WTC11 (cell line): ENCODE measurements at regions of chr15 and their contacts with region 1.

Region 1: GRCh38 chr15:41501931-41502794 is 8.5 kb downstream of the ITPKA start:
- DNase-seq: no peak
- ATAC-seq: peak; percentile 47
- H3K4me3 Mint-ChIP-seq: peak overlapping the region; percentile 61
- H3K27ac Mint-ChIP-seq: no peak overlapping the region
- H3K4me1 Mint-ChIP-seq: peaks cover 13% of the 10 kb centered on the region
- H3K27me3 Mint-ChIP-seq: peaks cover 100% of the 10 kb centered on the region
- CTCF ChIP-seq: no peak

Region 2: GRCh38 chr15:41483519-41483918 is 18.6 kb before region 1 on chr15:
- CTCF ChIA-PET with region 1: interaction called, 10 read pairs
- POLR2A ChIA-PET with region 1: no interaction called
- DNase-seq: no peak
- ATAC-seq: no peak
- H3K4me3 Mint-ChIP-seq: no peak overlapping the region
- H3K27ac Mint-ChIP-seq: no peak overlapping the region
- H3K4me1 Mint-ChIP-seq: no peaks in the 10 kb centered on the region
- H3K27me3 Mint-ChIP-seq: no peaks in the 10 kb centered on the region; the same call in 1 of the 2 replicates
- CTCF ChIP-seq: no peak